CD4-positive, alpha-beta T cell (primary cell): ENCODE measurements at regions of chr7 and their contacts with region 1.

Region 1: DNA sequence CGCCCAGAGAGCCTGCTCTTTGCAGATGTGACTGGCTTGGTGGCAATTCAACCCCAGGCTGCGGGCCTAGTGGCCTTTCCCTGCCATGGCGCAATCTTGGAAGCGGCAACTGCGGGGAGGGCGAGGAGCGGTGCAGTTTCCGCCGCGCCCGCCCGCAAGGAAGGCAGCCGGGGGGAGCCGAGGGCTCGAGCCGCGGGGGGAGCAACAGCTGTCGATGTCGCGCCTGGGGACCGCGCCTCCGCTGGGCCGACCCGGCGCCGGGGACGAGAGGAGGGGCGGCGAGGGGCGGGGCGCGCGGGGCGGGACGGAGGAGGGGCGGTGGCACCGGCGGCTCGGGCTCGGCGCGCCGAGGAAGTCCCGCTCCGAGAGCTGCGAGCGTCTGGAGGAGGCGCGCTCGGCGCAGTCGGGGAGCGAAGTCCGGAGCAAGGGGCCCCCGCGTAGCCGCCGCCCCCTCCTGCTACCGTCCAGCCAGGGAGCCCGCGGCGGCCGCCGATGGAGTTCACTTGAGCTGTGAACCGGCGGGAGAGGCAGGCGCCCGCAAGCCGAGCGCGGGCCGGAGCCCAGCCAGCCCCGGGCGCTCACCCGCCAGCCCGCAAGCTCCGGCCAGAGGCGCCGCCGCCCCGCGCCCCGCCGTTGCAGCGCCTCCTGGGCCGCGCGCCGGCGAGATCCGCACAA is 438.1 kb upstream of the GALNT17 start:
- DNase-seq: peak; percentile 22 to 85 (median 53)
- ATAC-seq: peak; percentile 79
- H3K4me3 ChIP-seq: peak overlapping the region; percentile 29
- H3K4me3 Mint-ChIP-seq: peak overlapping the region; percentile 89
- H3K27ac ChIP-seq: no peak overlapping the region
- H3K27ac Mint-ChIP-seq: peak overlapping the region; percentile 78
- H3K4me1 ChIP-seq: peaks cover 18% of the 10 kb centered on the region
- H3K4me1 Mint-ChIP-seq: peaks cover 31% of the 10 kb centered on the region
- H3K27me3 ChIP-seq: peaks cover 0 to 23% of the 10 kb centered on the region in 2 experiments
- H3K27me3 Mint-ChIP-seq: peaks cover 39% of the 10 kb centered on the region
- CTCF ChIP-seq: no peak

Region 2: DNA sequence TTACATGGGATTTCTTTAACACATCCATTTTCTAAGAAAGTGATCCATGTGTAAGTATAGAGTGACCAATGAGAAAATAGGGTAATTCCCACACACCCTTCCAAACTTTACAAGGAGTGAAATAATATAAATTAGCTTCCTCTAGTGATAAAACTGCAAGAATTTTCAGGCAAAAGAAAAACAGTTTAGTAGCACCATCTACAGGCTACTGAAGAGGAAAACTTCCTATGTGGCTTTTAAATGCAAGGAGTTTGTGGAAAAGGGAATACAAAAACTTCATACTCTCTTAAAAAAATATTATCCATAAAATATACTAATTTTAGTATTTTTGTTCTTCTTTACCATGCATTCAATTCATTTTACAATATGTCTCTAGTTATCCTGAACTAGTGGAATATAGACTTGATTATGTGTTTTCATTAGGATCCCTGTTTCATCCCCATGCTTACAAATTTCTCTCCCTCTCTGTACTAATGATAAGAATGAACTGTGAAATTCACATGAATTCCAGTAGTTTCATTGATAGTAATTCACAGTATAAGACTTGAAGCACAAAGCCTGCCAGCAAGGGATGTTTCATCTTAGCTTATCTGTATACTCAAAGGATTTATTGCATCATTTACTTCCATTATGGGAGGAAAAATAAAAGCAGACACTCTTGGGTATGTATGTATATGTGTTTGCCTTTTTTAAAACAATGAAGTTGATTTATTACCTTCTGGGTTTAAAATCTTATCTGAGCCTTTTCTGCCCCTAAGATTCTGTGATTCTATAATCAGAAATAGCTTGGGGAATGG is 652.7 kb before region 1 on chr7:
- CTCF ChIA-PET with region 1: no interaction called
- POLR2A ChIA-PET with region 1: no interaction called
- intact Hi-C with region 1: loop called in 1 of 2 experiments (anchors 5 kb)
- DNase-seq: peak in 1 of 14 experiments; percentile 4
- ATAC-seq: no peak
- H3K4me3 ChIP-seq: no peak overlapping the region
- H3K4me3 Mint-ChIP-seq: no peak overlapping the region
- H3K27ac ChIP-seq: no peak overlapping the region
- H3K27ac Mint-ChIP-seq: no peak overlapping the region
- H3K4me1 ChIP-seq: no peaks in the 10 kb centered on the region
- H3K4me1 Mint-ChIP-seq: no peaks in the 10 kb centered on the region
- H3K27me3 ChIP-seq: no peaks in the 10 kb centered on the region
- H3K27me3 Mint-ChIP-seq: no peaks in the 10 kb centered on the region
- CTCF ChIP-seq: no peak

Region 3: DNA sequence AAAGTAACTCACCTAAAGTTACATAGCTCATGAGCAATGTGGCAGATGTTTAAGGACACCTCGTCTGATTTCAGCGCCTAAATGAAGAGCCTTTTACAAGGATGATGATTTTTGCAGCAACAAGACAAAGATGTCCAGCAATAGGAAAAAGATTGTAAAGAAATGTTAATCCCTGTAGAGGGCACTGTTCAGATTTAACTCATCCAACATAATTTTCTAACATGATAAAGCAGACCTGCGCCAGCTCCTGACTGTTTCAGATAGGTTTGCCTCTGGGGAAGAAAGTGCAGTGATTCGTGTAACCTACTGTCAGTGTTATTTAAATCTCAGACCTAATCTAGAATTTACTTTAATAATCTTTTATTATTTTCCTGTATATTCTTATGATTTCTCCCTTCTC is 500.3 kb before region 1 on chr7:
- CTCF ChIA-PET with region 1: interaction called, 3 read pairs
- POLR2A ChIA-PET with region 1: no interaction called
- intact Hi-C with region 1: loop called (anchors 5 kb)
- DNase-seq: peak in 3 of 14 experiments; percentile 16 to 31 (median 17)
- ATAC-seq: no peak
- H3K4me3 ChIP-seq: no peak overlapping the region
- H3K4me3 Mint-ChIP-seq: no peak overlapping the region
- H3K27ac ChIP-seq: no peak overlapping the region
- H3K27ac Mint-ChIP-seq: no peak overlapping the region
- H3K4me1 ChIP-seq: no peaks in the 10 kb centered on the region
- H3K4me1 Mint-ChIP-seq: no peaks in the 10 kb centered on the region
- H3K27me3 ChIP-seq: no peaks in the 10 kb centered on the region
- H3K27me3 Mint-ChIP-seq: peaks cover 5% of the 10 kb centered on the region
- CTCF ChIP-seq: no peak

Region 4: GRCh38 chr7:70316786-70317755 is 376.8 kb before region 1 on chr7:
- CTCF ChIA-PET with region 1: no interaction called
- POLR2A ChIA-PET with region 1: interaction called, 3 read pairs
- intact Hi-C with region 1: loop called in 1 of 2 experiments (anchors 10 kb)
- DNase-seq: peak in 9 of 14 experiments; percentile 1 to 71 (median 26)
- ATAC-seq: peak; percentile 69
- H3K4me3 ChIP-seq: no peak overlapping the region
- H3K4me3 Mint-ChIP-seq: peak overlapping the region; percentile 9
- H3K27ac ChIP-seq: no peak overlapping the region
- H3K27ac Mint-ChIP-seq: peak overlapping the region; percentile 25
- H3K4me1 ChIP-seq: peaks cover 16% of the 10 kb centered on the region
- H3K4me1 Mint-ChIP-seq: peaks cover 30% of the 10 kb centered on the region
- H3K27me3 ChIP-seq: no peaks in the 10 kb centered on the region
- H3K27me3 Mint-ChIP-seq: no peaks in the 10 kb centered on the region
- CTCF ChIP-seq: no peak

Region 5: GRCh38 chr7:70585071-70585470 is 108.8 kb before region 1 on chr7:
- CTCF ChIA-PET with region 1: interaction called, 3 read pairs
- POLR2A ChIA-PET with region 1: no interaction called
- intact Hi-C with region 1: loop called in 1 of 2 experiments (anchors 10 kb)
- DNase-seq: peak in 5 of 14 experiments; percentile 1 to 20 (median 4)
- ATAC-seq: no peak
- H3K4me3 ChIP-seq: no peak overlapping the region
- H3K4me3 Mint-ChIP-seq: no peak overlapping the region
- H3K27ac ChIP-seq: no peak overlapping the region
- H3K27ac Mint-ChIP-seq: no peak overlapping the region
- H3K4me1 ChIP-seq: no peaks in the 10 kb centered on the region
- H3K4me1 Mint-ChIP-seq: no peaks in the 10 kb centered on the region
- H3K27me3 ChIP-seq: no peaks in the 10 kb centered on the region
- H3K27me3 Mint-ChIP-seq: no peaks in the 10 kb centered on the region
- CTCF ChIP-seq: no peak

Region 6: GRCh38 chr7:70634610-70635068 is 59.2 kb before region 1 on chr7:
- CTCF ChIA-PET with region 1: no interaction called
- POLR2A ChIA-PET with region 1: no interaction called
- intact Hi-C with region 1: loop called in 1 of 2 experiments (anchors 5 kb)
- DNase-seq: no peak
- ATAC-seq: no peak
- H3K4me3 ChIP-seq: no peak overlapping the region
- H3K4me3 Mint-ChIP-seq: no peak overlapping the region
- H3K27ac ChIP-seq: no peak overlapping the region
- H3K27ac Mint-ChIP-seq: no peak overlapping the region
- H3K4me1 ChIP-seq: no peaks in the 10 kb centered on the region
- H3K4me1 Mint-ChIP-seq: no peaks in the 10 kb centered on the region
- H3K27me3 ChIP-seq: no peaks in the 10 kb centered on the region
- H3K27me3 Mint-ChIP-seq: no peaks in the 10 kb centered on the region
- CTCF ChIP-seq: no peak

Region 7: GRCh38 chr7:70647801-70648498 is 45.9 kb before region 1 on chr7:
- CTCF ChIA-PET with region 1: interaction called, 5 read pairs
- POLR2A ChIA-PET with region 1: interaction called, 12 read pairs
- intact Hi-C with region 1: loop called (anchors 1 to 5 kb)
- DNase-seq: peak; percentile 23 to 93 (median 60)
- ATAC-seq: peak; percentile 91
- H3K4me3 ChIP-seq: peak overlapping the region; percentile 9
- H3K4me3 Mint-ChIP-seq: peak overlapping the region; percentile 47
- H3K27ac ChIP-seq: no peak overlapping the region
- H3K27ac Mint-ChIP-seq: peak overlapping the region; percentile 82
- H3K4me1 ChIP-seq: peaks cover 37% of the 10 kb centered on the region
- H3K4me1 Mint-ChIP-seq: peaks cover 18% of the 10 kb centered on the region
- H3K27me3 ChIP-seq: no peaks in the 10 kb centered on the region
- H3K27me3 Mint-ChIP-seq: no peaks in the 10 kb centered on the region
- CTCF ChIP-seq: no peak

Region 8: GRCh38 chr7:70812511-70812910 is 118.7 kb after region 1 on chr7:
- CTCF ChIA-PET with region 1: no interaction called
- POLR2A ChIA-PET with region 1: no interaction called
- intact Hi-C with region 1: no loop called
- DNase-seq: no peak
- ATAC-seq: no peak
- H3K4me3 ChIP-seq: no peak overlapping the region
- H3K4me3 Mint-ChIP-seq: no peak overlapping the region
- H3K27ac ChIP-seq: no peak overlapping the region
- H3K27ac Mint-ChIP-seq: no peak overlapping the region
- H3K4me1 ChIP-seq: no peaks in the 10 kb centered on the region
- H3K4me1 Mint-ChIP-seq: peaks cover 12% of the 10 kb centered on the region
- H3K27me3 ChIP-seq: no peaks in the 10 kb centered on the region
- H3K27me3 Mint-ChIP-seq: peaks cover 24% of the 10 kb centered on the region
- CTCF ChIP-seq: no peak